H1 (cell line): ENCODE measurements at regions of chr19 and their contacts with region 1.

Region 1: GRCh38 chr19:49712397-49712859 is 21.5 kb downstream of the CPT1C start:
- DNase-seq: peak; percentile 74 to 92
- H3K4me3 ChIP-seq: no peak overlapping the region
- H3K27ac ChIP-seq: no peak overlapping the region
- H3K4me1 ChIP-seq: no peaks in the 10 kb centered on the region; a peak in 1 of 7 replicates
- H3K27me3 ChIP-seq: no peaks in the 10 kb centered on the region
- CTCF ChIP-seq: no peak
- EP300 ChIP-seq: no peak
- POLR2A ChIP-seq: no peak
- RAD21 ChIP-seq: no peak

Region 2: DNA sequence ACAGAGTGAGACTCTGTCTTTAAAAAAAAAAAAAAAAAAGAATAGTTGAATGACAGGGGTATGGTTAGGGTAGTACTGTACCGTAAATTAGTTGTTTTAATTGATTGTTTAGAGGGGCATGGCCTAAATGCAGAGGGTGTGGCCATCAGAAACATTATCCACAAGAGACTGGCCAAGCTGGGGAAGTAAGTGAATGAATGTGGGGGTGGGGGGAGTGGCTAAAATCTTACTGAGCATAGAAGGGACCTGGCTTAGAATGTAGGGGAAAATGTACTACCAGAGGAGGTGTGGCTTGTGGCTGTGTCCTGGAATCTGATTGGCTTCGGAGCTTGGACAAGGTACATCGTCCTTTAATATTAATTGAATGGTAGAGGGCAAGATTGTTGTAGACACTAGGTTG is 42.9 kb before region 1 on chr19:
- CTCF ChIA-PET with region 1: no interaction called
- POLR2A ChIA-PET with region 1: no interaction called
- DNase-seq: no peak
- H3K4me3 ChIP-seq: no peak overlapping the region
- H3K27ac ChIP-seq: no peak overlapping the region
- H3K4me1 ChIP-seq: peaks cover 0 to 9% (median 3%) of the 10 kb centered on the region in 4 experiments; a peak in 4 of 7 replicates
- H3K27me3 ChIP-seq: no peaks in the 10 kb centered on the region
- CTCF ChIP-seq: no peak
- EP300 ChIP-seq: no peak
- POLR2A ChIP-seq: no peak
- RAD21 ChIP-seq: no peak

Region 3: DNA sequence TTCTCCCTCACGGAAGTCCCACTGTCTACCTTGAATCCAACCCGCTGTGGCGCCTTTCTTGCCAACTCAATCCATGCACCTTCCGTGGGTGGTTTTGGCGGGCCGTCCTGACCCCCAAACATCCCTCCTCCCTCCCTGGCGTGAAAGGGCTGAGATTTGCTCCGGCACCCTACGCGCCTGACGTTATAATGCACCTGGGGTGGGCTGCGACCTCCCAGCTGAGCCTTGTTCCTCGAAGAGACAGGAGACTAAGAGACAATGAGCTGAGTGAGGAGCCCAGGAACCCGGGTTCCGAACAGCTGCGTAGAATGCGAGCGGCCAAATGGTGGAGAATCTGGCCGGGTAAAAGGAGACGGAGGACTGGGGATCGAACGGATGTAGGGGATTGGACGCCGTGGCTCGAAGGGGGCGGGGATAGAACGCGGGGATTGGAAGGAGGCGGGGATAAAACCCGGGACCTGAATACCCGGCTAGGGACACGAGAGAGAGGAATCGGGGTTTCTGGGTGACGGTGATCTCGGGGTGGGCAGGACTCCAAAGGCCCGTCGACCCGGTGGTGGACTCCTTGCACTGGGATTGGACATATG is 21.7 kb before region 1 on chr19 and contains the start of gene CPT1C:
- CTCF ChIA-PET with region 1: interaction called, 11 read pairs
- POLR2A ChIA-PET with region 1: interaction called, 51 read pairs
- DNase-seq: peak; percentile 73 to 94
- H3K4me3 ChIP-seq: peak within 1 kb of the TSS; percentile 88 to 94 (median 92)
- H3K27ac ChIP-seq: peak within 1 kb of the TSS; percentile 57; the same call in 1 of the 2 replicates
- H3K4me1 ChIP-seq: peaks cover 0 to 25% (median 13%) of the 10 kb centered on the region in 4 experiments; a peak in 6 of 7 replicates
- H3K27me3 ChIP-seq: no peaks in the 10 kb centered on the region
- CTCF ChIP-seq: 0 out of 4 replicates have a peak, but pooled peaks of 1 of the 3 experiments have one; percentile 9
- EP300 ChIP-seq: no peak
- POLR2A ChIP-seq: peak; percentile 81; a peak in 2 of 3 replicates
- RAD21 ChIP-seq: no peak
- total RNA-seq, gene CPT1C: 91.8 and 98.3 TPM in 2 replicates

Region 4: DNA sequence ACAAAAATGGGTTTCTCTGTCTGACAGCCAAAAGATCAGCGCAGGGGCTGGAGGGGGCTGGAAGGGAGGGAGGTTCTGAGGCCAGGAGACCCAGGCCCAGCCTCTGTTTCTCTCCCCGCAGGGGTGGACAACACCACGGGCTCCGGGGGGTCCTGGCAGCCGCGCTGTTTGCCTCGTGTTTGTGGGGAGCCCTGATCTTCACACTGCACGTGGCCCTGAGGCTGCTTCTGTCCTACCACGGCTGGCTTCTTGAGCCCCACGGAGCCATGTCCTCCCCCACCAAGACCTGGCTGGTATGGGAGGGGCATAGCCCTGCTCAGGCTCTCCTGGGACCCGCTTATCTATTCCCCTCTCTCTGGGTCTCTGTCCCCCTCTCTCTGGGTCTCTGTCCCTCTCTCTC is 11.9 kb before region 1 on chr19:
- CTCF ChIA-PET with region 1: interaction called, 13 read pairs
- POLR2A ChIA-PET with region 1: interaction called, 14 read pairs
- DNase-seq: no peak
- H3K4me3 ChIP-seq: no peak overlapping the region
- H3K27ac ChIP-seq: no peak overlapping the region
- H3K4me1 ChIP-seq: no peaks in the 10 kb centered on the region
- H3K27me3 ChIP-seq: no peaks in the 10 kb centered on the region
- CTCF ChIP-seq: no peak
- EP300 ChIP-seq: no peak
- POLR2A ChIP-seq: no peak
- RAD21 ChIP-seq: no peak

Region 5: GRCh38 chr19:49755956-49756355 is 43.5 kb after region 1 on chr19:
- CTCF ChIA-PET with region 1: interaction called, 18 read pairs
- POLR2A ChIA-PET with region 1: no interaction called
- DNase-seq: no peak
- H3K4me3 ChIP-seq: no peak overlapping the region
- H3K27ac ChIP-seq: no peak overlapping the region
- H3K4me1 ChIP-seq: peaks cover 0 to 6% (median 2%) of the 10 kb centered on the region in 4 experiments; a peak in 3 of 7 replicates
- H3K27me3 ChIP-seq: no peaks in the 10 kb centered on the region
- CTCF ChIP-seq: no peak
- EP300 ChIP-seq: no peak
- POLR2A ChIP-seq: no peak
- RAD21 ChIP-seq: no peak